Adrenal gland (tissue), 19 donors: ENCODE measurements at regions of chr1 and their contacts with region 1.

Region 1: GRCh38 chr1:24070821-24071393 is 41.0 kb downstream of the MYOM3 start:
- DNase-seq: peak; percentile 69 to 87 (median 82)
- H3K4me3 ChIP-seq: no peak overlapping the region
- H3K27ac ChIP-seq: no peak overlapping the region
- H3K4me1 ChIP-seq: no peaks in the 10 kb centered on the region
- H3K27me3 ChIP-seq: no peaks in the 10 kb centered on the region
- CTCF ChIP-seq: peak; percentile 80 to 93 (median 86)
- POLR2A ChIP-seq: no peak

Region 2: GRCh38 chr1:24027838-24028468 is 43.0 kb before region 1 on chr1:
- intact Hi-C with region 1: no loop called
- DNase-seq: no peak
- H3K4me3 ChIP-seq: no peak overlapping the region
- H3K27ac ChIP-seq: no peak overlapping the region
- H3K4me1 ChIP-seq: peaks cover 0 to under 1% of the 10 kb centered on the region in 2 donors
- H3K27me3 ChIP-seq: no peaks in the 10 kb centered on the region
- CTCF ChIP-seq: peak; percentile 16 to 73 (median 64)
- POLR2A ChIP-seq: no peak

Region 3: DNA sequence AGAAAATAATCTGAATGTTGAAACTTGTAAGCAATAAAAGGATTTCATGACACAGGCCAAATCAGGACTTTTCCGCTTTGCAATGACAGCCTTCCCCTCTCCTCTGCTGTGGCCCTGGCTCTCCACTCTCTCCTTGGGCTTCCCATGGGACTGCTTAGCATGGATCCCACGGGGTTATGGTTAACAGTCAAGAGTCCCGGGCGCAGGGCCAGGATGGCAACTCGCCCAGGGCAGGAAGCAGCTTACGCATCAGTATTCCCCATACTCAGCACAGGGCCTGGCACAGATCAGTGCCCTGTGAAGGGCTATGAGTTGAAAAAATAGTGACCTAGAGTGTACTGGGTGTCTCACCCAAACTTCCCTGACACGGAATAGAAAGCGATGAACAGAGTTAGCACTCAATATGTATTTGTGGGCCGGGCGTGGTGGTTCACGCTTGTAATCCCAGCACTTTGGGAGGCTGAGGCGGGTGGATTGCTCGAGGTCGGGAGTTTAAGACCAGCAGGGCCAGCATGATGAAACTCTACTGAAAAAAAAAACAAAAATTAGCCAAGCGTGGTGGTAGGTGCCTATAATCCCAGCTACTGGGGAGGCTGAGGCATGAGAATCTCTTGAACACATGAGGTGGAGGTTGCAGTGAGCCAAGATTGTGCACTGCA is 219.2 kb after region 1 on chr1:
- intact Hi-C with region 1: loop called in 1 of 2 experiments (anchors 5 kb)
- DNase-seq: peak; percentile 75 to 94 (median 91)
- H3K4me3 ChIP-seq: no peak overlapping the region
- H3K27ac ChIP-seq: peak overlapping the region in 2 of 5 donors; percentile 10 to 51
- H3K4me1 ChIP-seq: peaks cover 0 to 7% of the 10 kb centered on the region in 2 donors
- H3K27me3 ChIP-seq: no peaks in the 10 kb centered on the region
- CTCF ChIP-seq: no peak
- POLR2A ChIP-seq: no peak

Region 4: GRCh38 chr1:24385160-24385940 is 314.4 kb after region 1 on chr1:
- intact Hi-C with region 1: loop called in 1 of 2 experiments (anchors 10 kb)
- DNase-seq: no peak
- H3K4me3 ChIP-seq: no peak overlapping the region
- H3K27ac ChIP-seq: no peak overlapping the region
- H3K4me1 ChIP-seq: no peaks in the 10 kb centered on the region
- H3K27me3 ChIP-seq: no peaks in the 10 kb centered on the region
- CTCF ChIP-seq: no peak
- POLR2A ChIP-seq: no peak